CD4-positive, alpha-beta T cell (primary cell): ENCODE measurements at regions of chr1 and their contacts with region 1.

Region 1: GRCh38 chr1:3649342-3650247 is at the start of gene WRAP73:
- DNase-seq: peak; percentile 79 to 96 (median 85)
- ATAC-seq: peak; percentile 97
- H3K4me3 ChIP-seq: peak within 1 kb of the TSS; percentile 84
- H3K4me3 Mint-ChIP-seq: peak within 1 kb of the TSS; percentile 86
- H3K27ac ChIP-seq: peak within 1 kb of the TSS in 1 of 2 donors; percentile 50
- H3K27ac Mint-ChIP-seq: peak within 1 kb of the TSS; percentile 32
- H3K4me1 ChIP-seq: peaks cover 37% of the 10 kb centered on the region
- H3K4me1 Mint-ChIP-seq: peaks cover 37% of the 10 kb centered on the region
- H3K27me3 ChIP-seq: peaks cover 31 to 34% of the 10 kb centered on the region in 2 experiments
- H3K27me3 Mint-ChIP-seq: peaks cover 32% of the 10 kb centered on the region
- CTCF ChIP-seq: no peak
- total RNA-seq, gene WRAP73: 22.3 to 22.7 TPM

Region 2: GRCh38 chr1:3721955-3722465 is 72.4 kb after region 1 on chr1:
- CTCF ChIA-PET with region 1: no interaction called
- POLR2A ChIA-PET with region 1: no interaction called
- intact Hi-C with region 1: loop called in 1 of 2 experiments (anchors 5 kb)
- DNase-seq: no peak
- ATAC-seq: no peak
- H3K4me3 ChIP-seq: no peak overlapping the region
- H3K4me3 Mint-ChIP-seq: no peak overlapping the region
- H3K27ac ChIP-seq: no peak overlapping the region
- H3K27ac Mint-ChIP-seq: no peak overlapping the region
- H3K4me1 ChIP-seq: peaks cover 30% of the 10 kb centered on the region
- H3K4me1 Mint-ChIP-seq: peaks cover 8% of the 10 kb centered on the region
- H3K27me3 ChIP-seq: no peaks in the 10 kb centered on the region
- H3K27me3 Mint-ChIP-seq: peaks cover 7% of the 10 kb centered on the region
- CTCF ChIP-seq: no peak

Region 3: DNA sequence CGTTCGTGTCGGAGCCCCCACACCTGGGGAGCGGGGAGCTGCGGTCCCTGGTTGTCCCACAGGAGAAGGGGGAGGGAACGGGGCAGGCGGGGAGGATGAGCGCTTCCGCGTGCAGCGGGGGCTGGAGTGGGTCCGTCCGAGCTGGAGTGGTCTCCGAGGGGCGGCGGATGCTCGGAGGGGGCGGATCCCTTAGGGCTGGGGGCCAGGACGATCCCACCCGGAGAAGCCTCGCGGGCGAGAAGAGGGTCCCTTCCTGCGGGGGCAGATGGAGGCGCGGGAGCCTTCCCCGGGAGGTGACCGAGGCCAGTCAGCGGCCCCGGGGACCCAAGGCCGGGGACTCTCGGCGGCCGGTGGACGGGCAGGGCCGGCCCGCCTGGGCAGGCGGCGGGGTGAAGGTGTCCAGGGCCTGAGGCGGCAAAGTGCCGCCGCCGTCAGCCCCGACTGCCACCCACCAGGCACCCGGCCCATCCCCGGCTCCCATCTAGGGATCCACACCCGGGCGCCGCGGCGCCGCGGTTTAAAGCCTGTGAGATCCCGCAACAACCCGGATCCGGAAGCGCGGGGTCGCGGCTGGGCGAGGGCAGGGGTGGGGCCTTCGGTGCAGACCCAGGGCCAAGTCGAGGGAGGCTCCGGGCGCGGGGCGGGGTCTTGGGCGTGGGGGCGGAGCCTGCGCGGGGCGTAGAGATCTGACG is 97.4 kb after region 1 on chr1:
- CTCF ChIA-PET with region 1: no interaction called
- POLR2A ChIA-PET with region 1: no interaction called
- intact Hi-C with region 1: loop called in 1 of 2 experiments (anchors 2 kb)
- DNase-seq: peak; percentile 76 to 94 (median 88)
- ATAC-seq: peak; percentile 98
- H3K4me3 ChIP-seq: peak overlapping the region; percentile 57
- H3K4me3 Mint-ChIP-seq: peak overlapping the region; percentile 79
- H3K27ac ChIP-seq: peak overlapping the region; percentile 26 to 29
- H3K27ac Mint-ChIP-seq: peak overlapping the region; percentile 65
- H3K4me1 ChIP-seq: peaks cover 29% of the 10 kb centered on the region
- H3K4me1 Mint-ChIP-seq: peaks cover 34% of the 10 kb centered on the region
- H3K27me3 ChIP-seq: no peaks in the 10 kb centered on the region
- H3K27me3 Mint-ChIP-seq: no peaks in the 10 kb centered on the region
- CTCF ChIP-seq: no peak